Activated CD8-positive, alpha-beta T cell treated with anti-CD3 and anti-CD28 coated beads for 36 hours (primary cell): ENCODE measurements at regions of chr12 and their contacts with region 1.

Region 1: DNA sequence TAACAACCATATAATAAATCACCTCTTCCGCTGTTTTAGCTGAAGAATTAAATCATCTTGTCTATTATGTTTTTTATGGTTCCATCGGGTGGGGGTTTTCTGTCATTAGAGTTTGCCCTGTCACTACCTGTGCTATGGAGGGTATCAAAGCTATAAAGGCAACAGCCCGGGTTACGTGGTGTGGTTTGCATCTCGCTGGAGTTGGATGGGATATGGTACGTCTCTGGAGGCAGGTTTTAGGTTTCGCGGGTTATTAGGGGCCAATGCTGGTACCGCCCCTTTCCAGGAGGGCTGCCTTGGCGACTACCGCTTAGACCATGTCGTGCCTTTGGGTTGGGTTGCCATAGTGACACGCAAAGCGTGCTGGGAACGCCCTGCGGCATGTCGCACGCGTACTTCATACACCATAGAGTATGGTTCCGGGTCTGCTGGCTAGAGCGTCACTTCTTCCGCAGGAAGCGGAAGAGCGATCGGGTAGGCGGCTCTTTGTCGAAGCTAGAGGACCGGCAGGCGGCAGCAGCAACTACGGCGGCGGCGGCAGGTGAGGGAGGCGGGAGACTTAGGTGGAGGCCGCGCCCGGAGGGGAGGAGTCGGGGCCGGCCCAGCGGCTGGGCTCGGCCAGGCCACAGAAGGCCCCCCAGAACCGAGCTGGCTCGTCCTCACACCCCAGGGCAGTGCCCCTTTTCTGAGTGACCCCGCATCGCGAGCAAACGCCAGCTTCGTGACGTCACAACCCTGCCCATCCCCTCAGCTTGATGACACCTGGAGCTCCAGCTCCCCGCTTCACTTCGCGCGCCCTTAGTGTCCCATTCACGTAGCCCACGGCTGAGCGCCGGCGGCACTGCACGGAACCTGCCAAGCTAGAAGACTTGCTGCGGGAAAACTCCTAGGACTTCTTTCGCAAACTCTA is at the start of gene ZC3H10:
- DNase-seq: peak; percentile 99
- ATAC-seq: peak; percentile 86
- H3K4me3 Mint-ChIP-seq: peak within 1 kb of the TSS; percentile 89
- H3K27ac Mint-ChIP-seq: peak within 1 kb of the TSS; percentile 100
- H3K4me1 Mint-ChIP-seq: peaks cover 23% of the 10 kb centered on the region
- H3K27me3 Mint-ChIP-seq: no peaks in the 10 kb centered on the region
- CTCF ChIP-seq: no peak
- total RNA-seq, gene ZC3H10: 6.8 to 7.2 TPM

Region 2: DNA sequence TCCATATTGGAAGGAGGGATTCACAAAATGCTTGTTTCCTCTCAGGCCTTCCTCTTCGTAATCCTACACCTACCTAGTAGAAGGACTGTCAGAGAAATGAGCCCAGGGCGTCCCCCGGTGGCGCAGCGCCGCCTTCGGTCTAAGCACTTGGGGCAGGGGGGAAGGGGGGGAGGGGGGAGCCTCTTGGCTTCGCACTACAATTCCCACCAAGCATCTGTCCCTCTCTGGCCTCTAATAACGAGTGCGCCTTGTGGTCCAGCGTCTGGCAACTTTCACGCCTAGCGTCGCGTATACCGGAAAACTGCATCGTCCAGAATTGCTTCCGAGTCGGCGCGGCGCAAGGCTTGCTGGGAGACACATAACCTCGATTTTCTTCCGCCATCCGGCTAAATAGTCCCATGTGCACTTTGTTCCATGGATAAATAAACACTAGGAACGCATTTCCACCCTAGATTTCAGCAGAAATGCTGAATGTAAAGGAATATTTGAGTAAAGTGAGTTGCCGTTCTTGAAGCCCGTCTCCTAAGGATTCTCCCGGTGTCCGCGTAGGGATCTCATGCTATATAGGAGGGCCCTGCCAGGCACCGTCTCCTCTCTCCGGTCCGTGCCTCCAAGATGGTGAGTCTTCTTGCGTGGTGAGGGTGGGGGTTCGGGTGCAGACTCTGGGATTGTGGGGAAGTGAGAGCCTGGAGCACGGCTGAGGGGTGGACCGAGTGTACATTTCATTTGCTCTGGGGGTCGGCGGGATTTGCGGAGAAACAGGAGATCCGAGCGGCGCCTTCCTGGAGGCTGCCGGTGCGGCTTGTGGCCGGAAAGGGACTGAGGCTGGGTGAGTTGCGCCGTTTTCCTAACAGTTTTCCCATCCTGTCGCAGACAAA is 76.2 kb before region 1 on chr12 and contains the start of gene RPS26:
- CTCF ChIA-PET with region 1: interaction called, 13 read pairs
- POLR2A ChIA-PET with region 1: interaction called, 41 read pairs
- intact Hi-C with region 1: loop called (anchors 5 kb)
- DNase-seq: peak; percentile 97
- ATAC-seq: peak; percentile 90
- H3K4me3 Mint-ChIP-seq: peak within 1 kb of the TSS; percentile 84
- H3K27ac Mint-ChIP-seq: peak within 1 kb of the TSS; percentile 92
- H3K4me1 Mint-ChIP-seq: peaks cover 52% of the 10 kb centered on the region
- H3K27me3 Mint-ChIP-seq: no peaks in the 10 kb centered on the region
- CTCF ChIP-seq: peak; percentile 57
- total RNA-seq, gene RPS26: 29.7 to 29.8 TPM

Region 3: DNA sequence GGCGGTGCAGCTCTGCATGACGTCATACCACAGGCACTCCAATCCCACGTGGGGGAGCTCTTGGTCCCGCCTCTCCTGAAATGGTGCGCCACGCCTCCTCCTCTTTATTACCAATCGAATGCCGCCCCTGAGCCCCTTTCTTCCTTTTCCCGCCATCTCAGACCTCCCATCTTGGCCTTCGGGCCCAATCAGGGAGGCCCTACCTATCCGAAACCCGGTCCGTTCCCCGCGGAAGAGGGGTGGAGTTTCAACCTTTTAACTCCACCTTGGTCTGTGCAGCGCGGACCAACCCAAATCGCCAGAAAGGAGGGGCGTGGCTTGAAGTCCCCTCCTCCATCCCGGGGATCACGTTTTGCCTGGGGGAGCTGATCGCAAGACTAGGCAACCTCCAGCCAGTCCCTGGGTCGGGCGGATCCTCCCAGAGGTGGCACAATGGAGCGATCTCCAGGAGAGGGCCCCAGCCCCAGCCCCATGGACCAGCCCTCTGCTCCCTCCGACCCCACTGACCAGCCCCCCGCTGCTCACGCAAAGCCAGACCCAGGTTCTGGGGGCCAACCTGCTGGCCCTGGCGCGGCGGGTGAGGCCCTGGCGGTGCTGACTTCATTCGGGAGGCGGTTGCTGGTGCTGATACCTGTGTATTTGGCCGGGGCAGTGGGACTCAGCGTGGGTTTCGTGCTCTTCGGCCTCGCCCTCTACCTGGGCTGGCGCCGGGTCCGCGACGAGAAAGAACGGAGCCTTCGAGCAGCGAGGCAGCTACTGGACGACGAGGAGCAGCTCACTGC is 10.0 kb after region 1 on chr12 and contains the start of gene ESYT1:
- CTCF ChIA-PET with region 1: interaction called, 57 read pairs
- POLR2A ChIA-PET with region 1: interaction called, 75 read pairs
- intact Hi-C with region 1: no loop called
- DNase-seq: peak; percentile 99
- ATAC-seq: peak; percentile 92
- H3K4me3 Mint-ChIP-seq: peak within 1 kb of the TSS; percentile 84
- H3K27ac Mint-ChIP-seq: peak within 1 kb of the TSS; percentile 93
- H3K4me1 Mint-ChIP-seq: peaks cover 53% of the 10 kb centered on the region
- H3K27me3 Mint-ChIP-seq: no peaks in the 10 kb centered on the region
- CTCF ChIP-seq: no peak
- total RNA-seq, gene ESYT1: 154 to 160 TPM

Region 4: GRCh38 chr12:56158029-56158925 is 40.2 kb after region 1 on chr12 and contains the start of gene MYL6:
- CTCF ChIA-PET with region 1: interaction called, 19 read pairs
- POLR2A ChIA-PET with region 1: interaction called, 26 read pairs
- intact Hi-C with region 1: loop called (anchors 5 kb)
- DNase-seq: peak; percentile 98
- ATAC-seq: peak; percentile 87
- H3K4me3 Mint-ChIP-seq: peak within 1 kb of the TSS; percentile 95
- H3K27ac Mint-ChIP-seq: peak within 1 kb of the TSS; percentile 98
- H3K4me1 Mint-ChIP-seq: peaks cover 33% of the 10 kb centered on the region
- H3K27me3 Mint-ChIP-seq: no peaks in the 10 kb centered on the region
- CTCF ChIP-seq: no peak
- total RNA-seq, gene MYL6: 647 to 663 TPM

Region 5: DNA sequence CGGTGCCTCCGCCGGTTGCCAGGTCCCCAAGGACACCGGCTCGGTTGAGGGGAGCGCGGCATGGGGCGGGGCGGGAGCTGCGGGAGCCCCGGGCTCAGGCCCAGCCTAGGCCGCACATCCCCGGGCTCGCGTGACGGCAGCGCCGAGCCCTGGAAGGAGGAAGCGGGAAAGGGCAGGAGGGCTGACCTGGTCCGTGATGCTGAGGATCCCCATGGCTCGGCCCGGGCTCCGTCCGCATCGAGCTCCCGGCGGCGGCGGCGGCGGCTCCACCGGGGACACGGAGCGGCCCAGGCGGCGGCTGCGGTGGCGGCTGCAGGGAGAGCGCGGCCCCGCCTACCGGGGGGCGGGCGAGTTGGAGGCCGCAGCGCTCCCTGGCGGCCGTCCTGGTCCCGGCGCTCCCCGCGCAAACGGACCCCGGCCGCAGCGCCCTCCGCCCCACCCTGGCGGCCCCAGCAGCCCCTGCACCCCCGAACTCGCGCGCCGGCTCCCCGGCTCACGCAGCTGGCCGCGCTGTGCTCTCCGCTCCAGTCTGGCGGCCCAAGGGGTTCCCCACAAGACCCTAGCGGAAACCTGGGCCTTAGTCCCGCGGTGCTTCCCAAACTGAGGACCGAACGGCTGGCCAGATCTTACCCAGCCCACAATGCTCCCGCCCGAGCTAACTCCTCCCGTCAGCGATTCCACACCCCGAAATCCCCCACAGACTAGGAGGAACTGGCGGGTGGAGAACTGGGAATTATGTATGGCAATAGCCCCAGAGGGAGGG is 140.2 kb after region 1 on chr12 and contains the start of gene ANKRD52:
- CTCF ChIA-PET with region 1: interaction called, 16 read pairs
- POLR2A ChIA-PET with region 1: interaction called, 11 read pairs
- intact Hi-C with region 1: loop called (anchors 10 kb)
- DNase-seq: peak; percentile 81
- ATAC-seq: peak; percentile 94
- H3K4me3 Mint-ChIP-seq: peak within 1 kb of the TSS; percentile 88
- H3K27ac Mint-ChIP-seq: peak within 1 kb of the TSS; percentile 87
- H3K4me1 Mint-ChIP-seq: peaks cover 19% of the 10 kb centered on the region
- H3K27me3 Mint-ChIP-seq: no peaks in the 10 kb centered on the region
- CTCF ChIP-seq: peak; percentile 80
- total RNA-seq, gene ANKRD52: 23.3 to 31.3 TPM